ENCODE measurements at regions of chr14 and their contacts with region 1.

Region 1: GRCh38 chr14:104390941-104391901 is 188.3 kb upstream of the C14orf180 start:
- H3K4me3 ChIP-seq: no peak overlapping the region
- H3K27ac ChIP-seq: no peak overlapping the region
- H3K4me1 ChIP-seq: no peaks in the 10 kb centered on the region
- CTCF ChIP-seq: no peak

Region 2: DNA sequence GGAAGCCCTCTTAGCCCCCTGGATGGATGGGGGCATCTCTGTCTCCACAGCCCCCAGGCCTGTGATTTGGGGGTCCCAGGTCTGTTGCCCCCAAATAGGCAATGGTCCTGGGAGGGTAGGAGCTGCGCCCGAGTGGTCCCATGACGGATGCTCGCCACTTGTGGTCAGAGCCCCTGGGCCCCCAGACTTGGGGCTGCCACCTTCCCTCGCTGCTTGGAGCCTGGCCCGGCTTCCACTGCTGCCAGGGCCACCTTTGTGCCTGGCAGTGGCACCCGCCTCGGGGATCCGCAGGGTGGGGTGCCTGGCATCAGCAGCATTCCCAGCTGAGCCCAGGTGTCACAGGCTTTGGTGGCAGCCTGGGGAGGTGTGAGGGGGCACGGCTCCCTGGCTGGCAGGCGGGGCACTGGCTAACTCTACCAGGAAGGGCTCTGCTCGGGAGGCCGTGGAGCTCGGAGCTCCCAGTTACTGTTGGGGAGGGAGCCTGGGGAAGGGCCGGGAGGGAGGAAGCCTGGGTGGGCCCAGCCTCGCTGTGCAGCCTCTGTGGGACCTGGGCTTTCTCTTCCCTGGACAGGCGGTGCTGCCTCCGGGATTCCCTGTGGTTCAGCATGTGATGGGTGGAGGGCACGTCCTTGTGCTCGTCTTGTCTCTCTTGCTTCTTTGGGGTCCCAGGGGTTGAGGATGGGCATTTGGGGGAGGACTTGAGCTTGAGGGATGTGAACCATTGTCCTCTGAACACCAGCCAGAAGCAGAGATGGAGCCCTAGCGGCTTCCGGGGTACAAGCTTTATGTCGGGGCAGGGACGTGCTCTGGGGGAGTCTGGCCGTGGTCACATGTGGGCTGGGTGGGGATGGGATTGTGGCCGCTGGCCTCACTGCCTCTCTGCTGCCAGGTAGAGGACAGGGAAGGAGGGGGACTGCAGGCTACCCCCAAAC is 247.4 kb before region 1 on chr14:
- CTCF ChIA-PET with region 1: no interaction called
- POLR2A ChIA-PET with region 1: interaction called, 12 read pairs
- H3K4me3 ChIP-seq: no peak overlapping the region
- H3K27ac ChIP-seq: no peak overlapping the region
- H3K4me1 ChIP-seq: 0 out of 2 replicates have a peak, but pooled peaks cover 4% of the 10 kb centered on the region
- CTCF ChIP-seq: no peak

Region 3: DNA sequence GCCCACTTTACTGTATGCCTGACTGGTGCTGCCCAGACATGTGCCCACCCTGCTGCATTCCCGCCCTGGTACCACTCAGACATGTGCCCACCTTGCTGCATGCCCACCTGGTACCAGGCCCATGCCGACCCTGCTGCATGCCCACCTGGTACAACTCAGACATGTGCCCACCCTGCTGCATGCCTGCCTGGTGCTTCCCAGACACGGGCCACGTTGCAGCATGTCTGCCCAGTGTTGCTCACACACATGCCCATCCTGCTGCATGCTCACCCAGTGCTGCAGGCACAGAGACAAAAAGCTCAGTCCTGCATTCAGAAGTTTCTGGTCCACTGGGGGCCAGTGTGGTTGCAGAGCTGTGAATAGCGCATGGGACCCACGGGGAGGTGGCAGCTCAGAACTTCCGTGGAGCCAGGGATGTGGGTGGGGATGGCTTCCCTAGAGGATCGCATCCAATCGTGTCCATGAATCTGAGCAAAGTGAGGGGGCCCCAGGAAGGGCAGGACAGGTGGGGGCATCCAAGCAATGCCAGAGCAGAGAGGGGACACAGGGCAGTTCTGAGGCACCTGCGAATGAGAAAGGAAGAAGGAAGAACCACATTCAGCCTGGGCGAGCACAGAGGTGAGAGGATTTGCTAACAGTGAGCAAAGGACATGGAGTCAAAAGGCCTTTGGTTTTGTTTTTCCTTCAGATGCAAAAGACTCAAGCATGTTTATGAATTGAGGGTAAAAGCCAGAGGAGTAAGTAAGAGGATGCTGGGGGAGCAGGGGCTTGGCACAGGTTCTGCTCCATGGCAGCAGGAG is 12.4 kb after region 1 on chr14:
- CTCF ChIA-PET with region 1: no interaction called
- POLR2A ChIA-PET with region 1: no interaction called
- H3K4me3 ChIP-seq: no peak overlapping the region
- H3K27ac ChIP-seq: no peak overlapping the region
- H3K4me1 ChIP-seq: no peaks in the 10 kb centered on the region
- CTCF ChIP-seq: no peak